ENCODE measurements at regions of chr16 and their contacts with region 1.

Region 1: GRCh38 chr16:19113453-19114351 is at the start of gene ITPRIPL2:
- DNase-seq: peak; percentile 91 to 93
- ATAC-seq: peak; percentile 89 to 94 (median 92)
- H3K4me3 ChIP-seq: peak within 1 kb of the TSS; percentile 65 to 89 (median 78)
- H3K27ac ChIP-seq: peak within 1 kb of the TSS; percentile 93 to 99 (median 98)
- H3K4me1 ChIP-seq: peaks cover 20 to 63% (median 48%) of the 10 kb centered on the region in 9 donors
- H3K27me3 ChIP-seq: peaks cover 0 to 4% (median 0%) of the 10 kb centered on the region in 7 donors
- CTCF ChIP-seq: peak in 3 of 9 donors; percentile 7 to 19 (median 9)
- total RNA-seq, gene ITPRIPL2: 11.5 to 30.6 (median 13.8) TPM

Region 2: DNA sequence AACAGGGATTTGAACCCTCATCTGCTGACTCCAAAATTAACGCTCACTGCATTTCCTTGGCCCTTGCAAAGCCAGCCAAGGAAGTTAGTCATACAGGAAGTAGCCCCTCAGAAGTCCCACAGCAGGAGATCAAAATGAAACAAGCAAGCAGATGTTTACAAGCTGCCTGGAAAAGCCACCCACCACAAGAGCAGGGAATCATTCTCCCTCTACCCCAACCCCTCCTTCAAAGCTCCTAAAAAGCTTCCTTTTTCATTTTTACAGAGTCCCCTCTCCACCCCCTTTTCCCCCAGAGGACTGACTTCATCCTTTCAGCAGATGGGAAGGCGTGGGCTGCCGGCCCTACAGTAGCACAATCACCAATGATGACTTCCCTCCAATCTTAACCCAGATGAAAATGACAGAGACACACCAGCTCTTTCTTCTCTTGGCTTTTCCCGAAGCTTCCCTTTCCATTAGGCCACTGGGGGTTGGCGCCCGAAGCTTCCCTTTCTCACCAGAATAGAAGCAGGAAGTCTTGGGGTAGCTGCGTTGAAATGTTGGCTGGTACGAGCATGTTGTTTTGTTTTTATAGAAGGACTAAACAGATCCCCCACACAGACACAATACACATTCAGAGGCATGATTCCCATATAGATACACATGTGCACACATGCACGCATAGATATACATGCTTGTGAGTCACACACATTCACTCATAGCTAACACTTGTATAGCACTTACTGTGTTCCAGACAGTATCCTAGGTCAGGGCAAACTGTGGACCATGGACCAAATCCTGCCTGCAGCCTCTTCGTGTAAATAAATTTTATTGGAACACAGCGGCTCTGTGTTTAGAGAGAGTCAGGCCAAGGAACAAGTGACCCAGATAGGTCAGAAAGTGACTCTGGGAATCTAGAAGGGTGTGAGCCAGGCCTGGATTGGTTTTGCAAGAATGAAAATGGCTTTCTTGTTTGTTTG is 17.4 kb after region 1 on chr16:
- intact Hi-C with region 1: loop called in 1 of 10 experiments (anchors 2 kb)
- DNase-seq: peak; percentile 39 to 80
- ATAC-seq: peak; percentile 80 to 91 (median 87)
- H3K4me3 ChIP-seq: peak overlapping the region in 3 of 10 donors; percentile 2 to 29 (median 13)
- H3K27ac ChIP-seq: peak overlapping the region; percentile 65 to 90 (median 82)
- H3K4me1 ChIP-seq: peaks cover 9 to 72% (median 46%) of the 10 kb centered on the region in 9 donors
- H3K27me3 ChIP-seq: no peaks in the 10 kb centered on the region
- CTCF ChIP-seq: no peak

Region 3: GRCh38 chr16:19167710-19168370 is 54.1 kb after region 1 on chr16 and contains the start of gene SYT17:
- intact Hi-C with region 1: loop called in 3 of 10 experiments (anchors 10 kb)
- DNase-seq: peak; percentile 50 to 77
- ATAC-seq: peak; percentile 88 to 93 (median 91)
- H3K4me3 ChIP-seq: peak within 1 kb of the TSS; percentile 45 to 64 (median 58)
- H3K27ac ChIP-seq: peak within 1 kb of the TSS in 5 of 10 donors; percentile 54 to 71 (median 66)
- H3K4me1 ChIP-seq: peaks cover 0 to 24% (median 15%) of the 10 kb centered on the region in 9 donors
- H3K27me3 ChIP-seq: peaks cover 0 to 61% (median 27%) of the 10 kb centered on the region in 7 donors
- CTCF ChIP-seq: peak; percentile 48 to 84 (median 68)
- total RNA-seq, gene SYT17: 0.20 to 1.3 (median 0.69) TPM

Region 4: GRCh38 chr16:19179546-19180490 is 66.1 kb after region 1 on chr16:
- intact Hi-C with region 1: loop called in 1 of 10 experiments (anchors 10 kb)
- DNase-seq: peak; percentile 55 to 70
- ATAC-seq: peak in 7 of 8 donors; percentile 63 to 83 (median 74)
- H3K4me3 ChIP-seq: no peak overlapping the region
- H3K27ac ChIP-seq: no peak overlapping the region
- H3K4me1 ChIP-seq: peaks cover 0 to 20% (median 0%) of the 10 kb centered on the region in 9 donors
- H3K27me3 ChIP-seq: peaks cover 0 to 8% (median 0%) of the 10 kb centered on the region in 7 donors
- CTCF ChIP-seq: peak; percentile 32 to 79 (median 61)